K562 (cell line): ENCODE measurements at regions of chr4 and their contacts with region 1.

Region 1: DNA sequence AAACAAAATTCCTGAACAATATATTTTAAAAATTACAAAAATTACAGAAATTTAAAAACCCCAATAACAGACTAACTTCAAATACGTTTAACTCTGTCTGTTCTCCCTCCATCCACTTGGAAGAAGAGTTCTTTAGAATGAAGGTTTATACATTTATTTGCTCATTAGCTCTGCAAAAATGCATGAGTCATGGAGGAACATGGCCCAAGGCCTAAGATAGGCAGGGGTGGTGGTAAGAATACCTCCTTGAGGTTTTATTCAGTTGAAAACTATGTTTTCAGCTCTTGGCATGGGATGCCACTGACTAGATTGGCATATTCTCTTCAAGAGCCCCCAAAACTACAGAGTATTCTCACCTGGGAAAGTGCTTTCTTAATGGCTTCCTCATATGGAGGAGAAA is 8.8 kb upstream of the LRRC66 start:
- DNase-seq: no peak
- ATAC-seq: no peak
- H3K4me3 ChIP-seq: no peak overlapping the region
- H3K27ac ChIP-seq: no peak overlapping the region
- H3K4me1 ChIP-seq: no peaks in the 10 kb centered on the region
- H3K27me3 ChIP-seq: no peaks in the 10 kb centered on the region
- CTCF ChIP-seq: no peak
- EP300 ChIP-seq: no peak
- POLR2A ChIP-seq: no peak
- RAD21 ChIP-seq: no peak

Region 2: DNA sequence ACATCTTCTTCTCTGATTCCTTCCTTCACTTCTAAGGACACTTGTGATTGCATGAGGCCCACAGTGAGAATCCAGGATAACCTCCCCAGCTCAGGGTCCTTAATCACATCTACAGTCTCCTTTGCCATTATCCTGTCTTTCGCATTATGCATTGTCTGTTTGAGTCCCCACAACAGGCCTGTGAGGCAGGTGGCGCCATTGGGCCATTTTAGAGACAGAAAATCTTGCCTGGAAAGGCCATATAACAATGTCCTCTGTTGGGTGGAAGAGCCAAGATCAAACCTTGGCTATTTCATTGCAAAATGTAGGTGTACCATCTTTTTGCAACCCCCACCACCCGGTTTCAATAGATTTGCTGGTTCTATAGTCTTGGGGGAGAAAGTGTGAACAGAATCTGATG is 197.8 kb before region 1 on chr4:
- CTCF ChIA-PET with region 1: interaction called, 27 read pairs
- POLR2A ChIA-PET with region 1: no interaction called
- in situ Hi-C with region 1: loop called (anchors 5 kb)
- intact Hi-C with region 1: loop called (anchors 1 kb)
- DNase-seq: peak in 2 of 4 experiments; percentile 38 to 72
- ATAC-seq: peak; percentile 95
- H3K4me3 ChIP-seq: no peak overlapping the region
- H3K27ac ChIP-seq: no peak overlapping the region
- H3K4me1 ChIP-seq: no peaks in the 10 kb centered on the region
- H3K27me3 ChIP-seq: peaks cover 2 to 3% of the 10 kb centered on the region in 2 experiments; a peak in 1 of 5 replicates
- CTCF ChIP-seq: peak; percentile 81 to 89 (median 83)
- EP300 ChIP-seq: no peak
- POLR2A ChIP-seq: no peak
- RAD21 ChIP-seq: peak; percentile 85 to 91